ENCODE measurements at regions of chr17 and their contacts with region 1.

Region 1: GRCh38 chr17:69878661-69879060 is 196.4 kb upstream of the KCNJ16 start:
- DNase-seq: peak; percentile 76
- H3K4me3 ChIP-seq: no peak overlapping the region
- H3K27ac ChIP-seq: peak overlapping the region; percentile 79
- H3K4me1 ChIP-seq: peaks cover 35% of the 10 kb centered on the region
- H3K27me3 ChIP-seq: no peaks in the 10 kb centered on the region
- CTCF ChIP-seq: no peak
- POLR2A ChIP-seq: no peak

Region 2: DNA sequence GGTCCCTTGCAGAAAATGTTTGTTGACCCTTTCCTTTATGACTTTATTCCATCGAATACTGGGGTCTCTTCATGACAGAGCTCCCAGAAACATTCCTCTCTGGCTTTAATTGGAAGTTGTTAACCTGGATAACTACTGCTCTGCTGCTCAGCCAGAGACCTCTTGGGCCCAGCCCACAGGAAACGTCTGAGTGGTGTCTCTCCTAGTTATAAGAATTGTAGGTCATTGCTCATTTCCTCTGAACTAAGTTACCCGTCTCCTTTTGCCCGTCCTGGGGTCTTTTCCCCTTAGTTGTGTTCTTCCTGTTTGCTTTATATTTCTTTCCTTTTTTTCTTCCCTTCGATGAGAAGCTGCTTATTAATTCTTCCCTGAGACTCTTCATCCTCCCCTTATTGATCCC is 455.2 kb before region 1 on chr17:
- CTCF ChIA-PET with region 1: no interaction called
- POLR2A ChIA-PET with region 1: no interaction called
- dilution Hi-C with region 1: no loop called
- intact Hi-C with region 1: loop called (anchors 5 kb)
- DNase-seq: peak; percentile 91
- H3K4me3 ChIP-seq: no peak overlapping the region
- H3K27ac ChIP-seq: peak overlapping the region; percentile 95
- H3K4me1 ChIP-seq: peaks cover 41% of the 10 kb centered on the region
- H3K27me3 ChIP-seq: no peaks in the 10 kb centered on the region
- CTCF ChIP-seq: no peak
- POLR2A ChIP-seq: peak; percentile 50

Measured in endothelial cell of umbilical vein (primary cell).